GM18951 (cell line): ENCODE measurements at regions of chr5 and their contacts with region 1.

Region 1: GRCh38 chr5:65481635-65482295 is at the start of gene ADAMTS6:
- POLR2A ChIP-seq: peak; percentile 56

Region 2: DNA sequence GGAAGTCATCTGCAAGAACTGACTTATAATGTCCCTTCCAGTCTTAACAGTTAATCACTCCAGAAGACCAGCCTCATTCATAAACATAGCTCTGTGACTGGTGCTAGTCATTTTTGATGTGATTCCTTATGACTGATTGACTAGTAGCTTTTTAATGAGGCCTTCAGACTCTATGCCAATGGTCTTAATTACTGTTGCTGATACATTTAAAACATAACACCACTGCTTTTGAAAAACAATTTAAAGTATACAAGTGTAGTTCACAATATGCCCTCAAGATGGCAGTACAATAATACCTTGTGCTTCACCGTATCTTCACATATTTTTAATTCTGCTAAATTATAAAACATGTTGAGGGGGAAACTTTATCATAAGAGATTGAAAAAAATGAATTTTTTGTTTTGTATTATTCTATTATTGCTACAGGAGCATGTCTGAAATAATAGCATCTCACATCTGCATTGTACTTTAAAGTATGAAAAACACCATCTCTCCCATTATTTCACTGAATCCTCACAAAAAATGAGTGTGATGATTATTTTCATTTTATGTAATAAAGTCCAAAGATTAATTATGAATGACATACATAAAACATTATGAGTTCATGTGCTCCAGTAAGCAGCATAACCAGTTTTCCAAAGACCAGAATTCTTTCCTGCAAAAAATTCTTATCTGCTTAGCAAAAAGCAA is 846.6 kb before region 1 on chr5:
- in situ Hi-C with region 1: loop called (anchors 25 kb)
- POLR2A ChIP-seq: no peak

Region 3: GRCh38 chr5:64807520-64807919 is 674.2 kb before region 1 on chr5:
- in situ Hi-C with region 1: loop called (anchors 10 kb)
- POLR2A ChIP-seq: no peak

Region 4: GRCh38 chr5:64965613-64966012 is 516.2 kb before region 1 on chr5:
- in situ Hi-C with region 1: loop called (anchors 10 kb)
- POLR2A ChIP-seq: no peak

Region 5: DNA sequence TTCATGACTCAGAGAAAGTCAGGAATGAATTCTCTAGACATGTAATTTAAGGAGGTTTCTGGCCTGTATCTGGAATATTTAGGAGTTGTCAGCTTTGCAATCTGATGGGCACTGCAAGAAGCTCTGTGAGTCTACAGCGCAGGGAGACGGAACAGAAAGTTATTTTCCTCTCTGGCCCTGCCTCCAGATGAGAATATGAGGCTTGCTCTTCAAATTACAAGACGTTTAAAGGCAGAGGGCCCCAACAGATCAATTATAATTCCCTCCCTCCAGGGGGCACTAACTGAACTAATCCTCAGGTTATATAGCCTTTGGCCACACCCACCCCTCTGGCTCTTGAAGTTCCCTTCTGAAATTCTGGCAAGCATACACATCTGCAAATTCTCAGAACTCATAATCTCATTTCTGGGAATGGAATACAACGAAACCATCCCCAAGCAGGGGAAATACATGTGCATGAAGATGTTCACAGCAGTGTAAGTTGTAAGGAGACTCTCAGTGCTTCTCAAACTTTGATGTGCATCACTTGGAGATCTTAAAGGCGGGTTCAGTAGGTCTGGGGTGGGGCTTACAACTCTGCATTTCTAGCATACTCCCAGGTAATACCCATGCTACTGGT is 405.4 kb before region 1 on chr5:
- in situ Hi-C with region 1: loop called (anchors 25 kb)
- POLR2A ChIP-seq: no peak